CD4-positive, alpha-beta T cell (primary cell): ENCODE measurements at regions of chr9 and their contacts with region 1.

Region 1: GRCh38 chr9:88143957-88144625 is 5.8 kb upstream of the SPATA31C2 start:
- DNase-seq: no peak
- ATAC-seq: no peak
- H3K4me3 ChIP-seq: no peak overlapping the region
- H3K4me3 Mint-ChIP-seq: no peak overlapping the region
- H3K27ac ChIP-seq: no peak overlapping the region
- H3K27ac Mint-ChIP-seq: no peak overlapping the region
- H3K4me1 ChIP-seq: no peaks in the 10 kb centered on the region
- H3K4me1 Mint-ChIP-seq: peaks cover 3% of the 10 kb centered on the region
- H3K27me3 ChIP-seq: peaks cover 4% of the 10 kb centered on the region in 2 experiments
- H3K27me3 Mint-ChIP-seq: peaks cover 48% of the 10 kb centered on the region
- CTCF ChIP-seq: no peak

Region 2: DNA sequence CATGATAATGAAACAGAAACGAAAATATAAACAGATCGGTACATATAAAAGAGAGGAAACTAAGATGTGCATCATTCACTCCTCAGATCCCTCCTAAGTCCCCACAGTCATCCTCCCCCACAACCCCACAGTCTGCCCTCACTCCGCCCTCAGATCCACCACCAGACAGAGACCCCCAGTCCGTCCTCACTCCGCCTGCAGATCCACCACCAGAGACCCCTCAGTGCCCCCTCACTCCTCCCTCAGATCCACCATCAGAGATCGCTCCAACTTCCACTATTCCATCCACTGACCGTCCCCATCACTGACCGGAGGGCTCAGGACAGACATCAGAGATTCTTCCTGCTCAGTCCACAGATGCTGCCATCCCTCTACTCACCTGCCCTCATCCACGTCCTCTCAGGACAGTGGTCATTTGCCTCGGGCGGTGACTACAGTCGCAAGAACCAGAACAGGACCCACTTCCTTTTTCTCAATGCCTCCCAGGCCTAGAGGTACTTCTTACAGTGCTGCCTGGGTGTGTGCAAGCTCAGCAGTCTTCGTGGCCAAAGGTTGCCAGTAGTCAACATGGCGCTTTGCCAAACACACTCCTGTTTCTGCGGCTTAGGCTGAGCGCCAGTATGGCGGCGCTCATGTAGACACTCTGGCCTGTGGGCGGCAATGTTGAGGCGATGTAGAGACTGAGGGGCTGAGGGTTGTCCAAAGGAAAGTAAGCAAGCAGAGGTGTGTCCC is 234.6 kb before region 1 on chr9:
- CTCF ChIA-PET with region 1: no interaction called
- POLR2A ChIA-PET with region 1: no interaction called
- intact Hi-C with region 1: loop called in 1 of 2 experiments (anchors 10 kb)
- DNase-seq: no peak
- ATAC-seq: no peak
- H3K4me3 ChIP-seq: no peak overlapping the region
- H3K4me3 Mint-ChIP-seq: no peak overlapping the region
- H3K27ac ChIP-seq: no peak overlapping the region
- H3K27ac Mint-ChIP-seq: no peak overlapping the region
- H3K4me1 ChIP-seq: no peaks in the 10 kb centered on the region
- H3K4me1 Mint-ChIP-seq: no peaks in the 10 kb centered on the region
- H3K27me3 ChIP-seq: no peaks in the 10 kb centered on the region
- H3K27me3 Mint-ChIP-seq: peaks cover 4% of the 10 kb centered on the region
- CTCF ChIP-seq: no peak

Region 3: GRCh38 chr9:88072851-88073365 is 71.2 kb before region 1 on chr9:
- CTCF ChIA-PET with region 1: no interaction called
- POLR2A ChIA-PET with region 1: no interaction called
- intact Hi-C with region 1: no loop called
- DNase-seq: no peak
- ATAC-seq: no peak
- H3K4me3 ChIP-seq: no peak overlapping the region
- H3K4me3 Mint-ChIP-seq: no peak overlapping the region
- H3K27ac ChIP-seq: no peak overlapping the region
- H3K27ac Mint-ChIP-seq: no peak overlapping the region
- H3K4me1 ChIP-seq: peaks cover 13% of the 10 kb centered on the region
- H3K4me1 Mint-ChIP-seq: peaks cover 9% of the 10 kb centered on the region
- H3K27me3 ChIP-seq: peaks cover 14 to 20% of the 10 kb centered on the region in 2 experiments
- H3K27me3 Mint-ChIP-seq: peaks cover 78% of the 10 kb centered on the region
- CTCF ChIP-seq: no peak

Region 4: GRCh38 chr9:88084357-88085183 is 59.5 kb before region 1 on chr9:
- CTCF ChIA-PET with region 1: no interaction called
- POLR2A ChIA-PET with region 1: no interaction called
- intact Hi-C with region 1: no loop called
- DNase-seq: no peak
- ATAC-seq: no peak
- H3K4me3 ChIP-seq: no peak overlapping the region
- H3K4me3 Mint-ChIP-seq: no peak overlapping the region
- H3K27ac ChIP-seq: no peak overlapping the region
- H3K27ac Mint-ChIP-seq: no peak overlapping the region
- H3K4me1 ChIP-seq: no peaks in the 10 kb centered on the region
- H3K4me1 Mint-ChIP-seq: no peaks in the 10 kb centered on the region
- H3K27me3 ChIP-seq: no peaks in the 10 kb centered on the region
- H3K27me3 Mint-ChIP-seq: no peaks in the 10 kb centered on the region
- CTCF ChIP-seq: no peak

Region 5: GRCh38 chr9:88236531-88237478 is 92.7 kb after region 1 on chr9:
- CTCF ChIA-PET with region 1: no interaction called
- POLR2A ChIA-PET with region 1: no interaction called
- intact Hi-C with region 1: no loop called
- DNase-seq: no peak
- ATAC-seq: no peak
- H3K4me3 ChIP-seq: no peak overlapping the region
- H3K4me3 Mint-ChIP-seq: no peak overlapping the region
- H3K27ac ChIP-seq: no peak overlapping the region
- H3K27ac Mint-ChIP-seq: no peak overlapping the region
- H3K4me1 ChIP-seq: peaks cover 7% of the 10 kb centered on the region
- H3K4me1 Mint-ChIP-seq: peaks cover 14% of the 10 kb centered on the region
- H3K27me3 ChIP-seq: peaks cover 0 to 4% of the 10 kb centered on the region in 2 experiments
- H3K27me3 Mint-ChIP-seq: peaks cover 4% of the 10 kb centered on the region
- CTCF ChIP-seq: no peak